ENCODE measurements at regions of chr9 and their contacts with region 1.

Region 1: GRCh38 chr9:111916234-111916645 is 19.6 kb downstream of the UGCG start:
- DNase-seq: peak; percentile 46
- ATAC-seq: peak; percentile 82
- H3K4me3 Mint-ChIP-seq: peak overlapping the region; percentile 49
- H3K27ac Mint-ChIP-seq: peak overlapping the region; percentile 89
- H3K4me1 Mint-ChIP-seq: peaks cover 57% of the 10 kb centered on the region
- H3K27me3 Mint-ChIP-seq: no peaks in the 10 kb centered on the region
- CTCF ChIP-seq: no peak

Region 2: DNA sequence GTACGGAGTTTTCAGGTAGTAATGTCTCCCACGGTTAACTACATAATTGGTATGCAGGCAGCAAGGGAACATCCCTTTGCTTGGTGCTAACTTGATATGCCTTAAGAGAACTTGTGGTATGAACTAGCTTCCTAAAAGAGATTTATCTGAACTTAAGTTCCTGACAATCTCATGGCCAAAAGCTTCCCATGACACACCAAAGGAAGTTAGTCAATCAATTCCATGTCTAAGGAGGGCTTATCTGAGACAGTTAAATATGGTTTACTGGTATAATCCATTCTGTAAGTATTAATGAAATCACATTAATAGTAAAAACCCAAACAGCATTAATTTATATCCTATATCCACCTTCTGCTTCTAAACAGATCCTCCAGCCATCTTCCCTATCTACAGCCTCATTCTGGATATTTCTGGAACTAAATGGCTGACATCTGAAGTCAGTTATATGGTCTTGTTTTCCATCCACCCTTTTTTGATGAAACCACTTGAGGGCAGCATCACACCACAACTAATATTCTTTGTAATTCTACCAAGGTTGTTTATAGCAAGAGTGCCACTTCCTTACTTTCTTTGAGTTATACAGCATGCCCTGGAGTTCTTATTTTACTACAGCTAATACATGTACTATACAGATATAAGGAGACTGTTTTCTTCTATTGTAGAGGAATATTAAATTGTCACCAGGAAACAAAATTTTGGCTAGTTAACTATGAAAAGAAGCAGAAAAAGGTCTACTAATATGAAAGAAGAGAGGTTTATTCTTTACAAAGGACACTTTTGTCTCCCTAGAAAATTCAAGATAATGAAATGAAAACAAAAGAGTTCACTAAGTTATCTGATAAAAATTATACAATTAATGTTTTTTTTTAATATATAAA is 156.2 kb before region 1 on chr9:
- CTCF ChIA-PET with region 1: no interaction called
- POLR2A ChIA-PET with region 1: no interaction called
- intact Hi-C with region 1: loop called (anchors 10 kb)
- DNase-seq: peak; percentile 68
- ATAC-seq: peak; percentile 60
- H3K4me3 Mint-ChIP-seq: no peak overlapping the region
- H3K27ac Mint-ChIP-seq: no peak overlapping the region
- H3K4me1 Mint-ChIP-seq: peaks cover 4% of the 10 kb centered on the region
- H3K27me3 Mint-ChIP-seq: no peaks in the 10 kb centered on the region
- CTCF ChIP-seq: peak; percentile 76

Region 3: DNA sequence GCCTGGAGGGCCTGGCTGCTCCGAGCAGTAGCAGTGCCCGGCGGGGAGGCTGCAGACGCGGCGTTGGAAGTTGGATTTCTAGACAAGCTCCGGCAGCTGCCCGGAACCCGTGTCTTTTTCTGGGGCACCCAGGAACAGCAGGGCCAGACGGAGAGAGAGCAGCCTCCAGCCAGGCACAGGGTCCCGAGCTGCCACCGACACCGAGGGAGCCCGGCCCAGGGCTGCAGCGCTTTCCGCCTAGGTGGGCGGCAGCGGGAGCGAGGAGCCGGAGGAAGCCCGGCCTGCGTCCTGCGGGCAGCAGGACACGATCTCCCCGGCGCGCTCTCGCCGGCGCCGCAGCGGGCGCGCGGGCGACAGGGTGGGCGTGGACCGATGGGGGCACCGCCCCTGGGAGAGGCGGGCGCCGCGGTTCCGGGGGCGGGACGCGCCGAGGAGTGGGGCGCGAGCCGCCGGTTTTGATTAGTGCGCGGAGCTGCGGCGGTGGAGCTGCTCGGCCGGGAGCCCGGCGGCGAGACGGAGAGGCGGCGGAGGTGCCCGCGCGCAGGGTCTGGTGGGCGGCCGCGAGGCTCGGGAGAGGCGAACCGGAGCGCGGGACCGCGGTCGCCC is 19.8 kb before region 1 on chr9 and contains the start of gene UGCG:
- CTCF ChIA-PET with region 1: interaction called, 15 read pairs
- POLR2A ChIA-PET with region 1: interaction called, 19 read pairs
- intact Hi-C with region 1: no loop called
- DNase-seq: peak; percentile 88
- ATAC-seq: peak; percentile 88
- H3K4me3 Mint-ChIP-seq: peak within 1 kb of the TSS; percentile 87
- H3K27ac Mint-ChIP-seq: peak within 1 kb of the TSS; percentile 90
- H3K4me1 Mint-ChIP-seq: peaks cover 13% of the 10 kb centered on the region
- H3K27me3 Mint-ChIP-seq: no peaks in the 10 kb centered on the region
- CTCF ChIP-seq: no peak
- total RNA-seq, gene UGCG: 13.5 to 14.3 TPM

Region 4: DNA sequence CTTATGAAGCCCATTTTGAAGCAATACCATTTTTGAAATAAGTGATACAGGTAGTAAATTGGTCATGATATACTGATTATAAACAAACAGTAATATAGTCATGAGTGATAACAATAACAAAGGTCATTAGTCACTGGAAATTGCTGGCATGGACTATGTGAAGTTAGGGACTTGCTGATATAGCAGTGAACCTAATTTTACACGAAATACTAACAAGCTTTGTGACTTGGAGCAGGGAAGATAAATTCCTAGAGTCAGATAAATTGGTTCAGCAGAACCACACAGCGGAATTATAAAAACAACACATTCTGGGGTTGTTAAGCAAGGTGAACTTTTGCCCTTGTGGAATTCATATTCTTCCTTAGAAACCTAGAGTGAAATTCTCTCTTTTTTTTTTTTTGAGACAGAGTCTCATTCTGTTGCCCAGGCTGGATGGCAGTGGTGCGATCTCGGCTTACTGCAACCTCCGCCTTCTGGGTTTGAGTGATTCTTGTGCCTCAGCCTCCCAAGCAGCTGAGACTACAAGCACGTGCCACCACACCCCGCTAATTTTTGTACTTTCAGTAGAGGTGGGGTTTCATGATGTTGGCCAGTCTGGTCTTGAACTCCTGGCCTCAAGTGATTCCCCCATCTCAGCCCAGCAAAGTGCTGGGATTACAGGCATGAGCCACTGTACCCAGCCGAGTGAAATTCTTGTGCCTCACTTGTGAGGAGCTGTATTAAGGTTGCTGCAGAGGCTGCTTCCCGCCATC is 13.7 kb before region 1 on chr9:
- CTCF ChIA-PET with region 1: interaction called, 15 read pairs
- POLR2A ChIA-PET with region 1: interaction called, 19 read pairs
- intact Hi-C with region 1: no loop called
- DNase-seq: no peak
- ATAC-seq: no peak
- H3K4me3 Mint-ChIP-seq: no peak overlapping the region
- H3K27ac Mint-ChIP-seq: no peak overlapping the region
- H3K4me1 Mint-ChIP-seq: peaks cover 35% of the 10 kb centered on the region
- H3K27me3 Mint-ChIP-seq: no peaks in the 10 kb centered on the region
- CTCF ChIP-seq: no peak

Region 5: GRCh38 chr9:111926421-111926875 is 10.2 kb after region 1 on chr9:
- CTCF ChIA-PET with region 1: interaction called, 11 read pairs
- POLR2A ChIA-PET with region 1: interaction called, 8 read pairs
- intact Hi-C with region 1: no loop called
- DNase-seq: peak; percentile 75
- ATAC-seq: peak; percentile 96
- H3K4me3 Mint-ChIP-seq: no peak overlapping the region
- H3K27ac Mint-ChIP-seq: peak overlapping the region; percentile 75
- H3K4me1 Mint-ChIP-seq: peaks cover 35% of the 10 kb centered on the region
- H3K27me3 Mint-ChIP-seq: no peaks in the 10 kb centered on the region
- CTCF ChIP-seq: no peak

Region 6: DNA sequence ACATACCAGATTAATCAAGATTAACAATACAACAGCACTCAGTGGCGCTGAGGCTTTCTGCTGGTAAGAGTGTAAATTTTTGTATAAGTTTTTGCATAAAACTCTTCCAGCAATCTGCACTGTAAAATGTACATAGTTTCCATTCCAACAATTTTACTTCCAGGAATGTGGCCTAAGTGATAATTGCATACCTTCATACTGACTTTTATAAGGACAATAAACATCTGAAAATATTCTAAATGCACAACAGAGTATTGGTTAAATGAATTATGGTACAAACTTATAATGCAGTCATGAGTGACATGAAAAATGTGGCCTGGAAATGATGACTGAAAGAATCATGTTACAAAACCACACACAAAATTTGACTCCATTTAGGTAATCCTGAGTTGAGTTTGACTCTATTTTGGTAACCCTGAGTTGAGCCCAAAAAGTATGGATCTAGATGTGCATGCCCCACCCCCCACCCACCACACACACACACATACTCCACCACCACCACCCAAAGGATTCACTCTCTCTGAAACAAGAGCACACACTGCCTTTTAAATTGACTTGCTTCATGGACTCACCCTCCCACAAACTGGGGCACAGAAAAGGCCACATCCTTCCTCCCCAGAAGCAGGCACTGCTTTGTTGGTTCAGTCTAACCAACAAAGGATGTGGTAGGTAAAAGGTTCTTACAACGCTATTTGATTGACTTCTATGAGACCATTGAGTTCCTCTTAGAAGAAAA is 121.2 kb after region 1 on chr9:
- CTCF ChIA-PET with region 1: interaction called, 4 read pairs
- POLR2A ChIA-PET with region 1: interaction called, 6 read pairs
- intact Hi-C with region 1: loop called (anchors 5 kb)
- DNase-seq: peak; percentile 87
- ATAC-seq: peak; percentile 93
- H3K4me3 Mint-ChIP-seq: peak overlapping the region; percentile 0
- H3K27ac Mint-ChIP-seq: peak overlapping the region; percentile 65
- H3K4me1 Mint-ChIP-seq: peaks cover 48% of the 10 kb centered on the region
- H3K27me3 Mint-ChIP-seq: peaks cover 21% of the 10 kb centered on the region
- CTCF ChIP-seq: no peak

Region 7: DNA sequence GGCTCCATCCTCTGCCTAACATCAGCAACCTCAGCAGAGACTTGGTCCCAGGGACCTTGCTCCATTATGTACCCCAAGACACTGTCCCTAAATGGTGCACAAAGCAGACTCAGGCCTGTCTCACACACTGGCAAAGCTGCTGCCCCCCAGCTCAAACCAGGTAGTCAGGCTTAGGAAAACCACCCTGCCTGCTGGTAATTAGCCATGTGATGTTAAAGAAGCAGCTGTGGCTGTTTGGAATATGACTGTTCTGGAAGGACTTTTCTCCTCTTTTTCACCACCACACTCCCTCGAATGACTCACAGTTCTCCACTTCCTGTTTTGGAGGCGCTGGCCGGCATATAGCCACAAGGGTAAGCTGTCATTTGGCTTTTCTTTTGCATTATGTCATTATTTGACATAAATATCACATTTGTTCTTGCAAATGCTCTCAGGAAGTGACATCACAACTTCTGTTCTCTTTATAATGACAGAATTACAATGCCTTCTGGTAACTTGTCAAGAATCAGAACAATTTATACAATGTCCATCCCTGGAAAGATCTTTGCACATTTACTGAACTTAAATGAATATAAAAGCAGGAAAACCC is 145.0 kb after region 1 on chr9:
- CTCF ChIA-PET with region 1: no interaction called
- POLR2A ChIA-PET with region 1: no interaction called
- intact Hi-C with region 1: no loop called
- DNase-seq: peak; percentile 65
- ATAC-seq: peak; percentile 84
- H3K4me3 Mint-ChIP-seq: no peak overlapping the region
- H3K27ac Mint-ChIP-seq: peak overlapping the region; percentile 7
- H3K4me1 Mint-ChIP-seq: peaks cover 22% of the 10 kb centered on the region
- H3K27me3 Mint-ChIP-seq: no peaks in the 10 kb centered on the region
- CTCF ChIP-seq: no peak

Region 8: GRCh38 chr9:112252194-112252593 is 336.0 kb after region 1 on chr9:
- CTCF ChIA-PET with region 1: no interaction called
- POLR2A ChIA-PET with region 1: no interaction called
- intact Hi-C with region 1: no loop called
- DNase-seq: no peak
- ATAC-seq: no peak
- H3K4me3 Mint-ChIP-seq: no peak overlapping the region
- H3K27ac Mint-ChIP-seq: no peak overlapping the region
- H3K4me1 Mint-ChIP-seq: peaks cover 21% of the 10 kb centered on the region
- H3K27me3 Mint-ChIP-seq: no peaks in the 10 kb centered on the region
- CTCF ChIP-seq: no peak